CD8-positive, alpha-beta T cell (primary cell): ENCODE measurements at regions of chr14 and their contacts with region 1.

Region 1: GRCh38 chr14:105549481-105549880 is 23.1 kb downstream of the TMEM121 start:
- DNase-seq: no peak
- ATAC-seq: no peak
- H3K4me3 ChIP-seq: no peak overlapping the region
- H3K4me3 Mint-ChIP-seq: no peak overlapping the region
- H3K27ac ChIP-seq: no peak overlapping the region
- H3K27ac Mint-ChIP-seq: no peak overlapping the region
- H3K4me1 ChIP-seq: no peaks in the 10 kb centered on the region
- H3K4me1 Mint-ChIP-seq: no peaks in the 10 kb centered on the region
- H3K27me3 ChIP-seq: no peaks in the 10 kb centered on the region
- H3K27me3 Mint-ChIP-seq: peaks cover 15% of the 10 kb centered on the region
- CTCF ChIP-seq: no peak

Region 2: GRCh38 chr14:105537369-105538164 is 11.9 kb before region 1 on chr14:
- CTCF ChIA-PET with region 1: interaction called, 10 read pairs
- POLR2A ChIA-PET with region 1: no interaction called
- intact Hi-C with region 1: no loop called
- DNase-seq: peak; percentile 60 to 83 (median 71)
- ATAC-seq: peak; percentile 81
- H3K4me3 ChIP-seq: no peak overlapping the region
- H3K4me3 Mint-ChIP-seq: no peak overlapping the region
- H3K27ac ChIP-seq: no peak overlapping the region
- H3K27ac Mint-ChIP-seq: no peak overlapping the region
- H3K4me1 ChIP-seq: peaks cover 7% of the 10 kb centered on the region
- H3K4me1 Mint-ChIP-seq: peaks cover 2% of the 10 kb centered on the region
- H3K27me3 ChIP-seq: peaks cover 3 to 4% of the 10 kb centered on the region in 2 experiments
- H3K27me3 Mint-ChIP-seq: peaks cover 12% of the 10 kb centered on the region
- CTCF ChIP-seq: peak; percentile 96

Region 3: GRCh38 chr14:105944632-105945610 is 395.4 kb after region 1 on chr14:
- CTCF ChIA-PET with region 1: no interaction called
- POLR2A ChIA-PET with region 1: no interaction called
- intact Hi-C with region 1: loop called in 1 of 2 experiments (anchors 10 kb)
- DNase-seq: peak; percentile 51 to 87 (median 80)
- ATAC-seq: peak; percentile 79
- H3K4me3 ChIP-seq: no peak overlapping the region
- H3K4me3 Mint-ChIP-seq: no peak overlapping the region
- H3K27ac ChIP-seq: no peak overlapping the region
- H3K27ac Mint-ChIP-seq: no peak overlapping the region
- H3K4me1 ChIP-seq: no peaks in the 10 kb centered on the region
- H3K4me1 Mint-ChIP-seq: peaks cover 13% of the 10 kb centered on the region
- H3K27me3 ChIP-seq: no peaks in the 10 kb centered on the region
- H3K27me3 Mint-ChIP-seq: peaks cover 7% of the 10 kb centered on the region
- CTCF ChIP-seq: peak; percentile 88